GM12878 (cell line): ENCODE measurements at regions of chr10 and their contacts with region 1.

Region 1: GRCh38 chr10:80187465-80188409 is 17.6 kb downstream of the ANXA11 start:
- DNase-seq: peak; percentile 56
- ATAC-seq: peak; percentile 94
- H3K4me3 ChIP-seq: peak overlapping the region; percentile 28; the same call in 1 of the 2 replicates
- H3K27ac ChIP-seq: peak overlapping the region; percentile 69
- H3K4me1 ChIP-seq: peaks cover 22% of the 10 kb centered on the region
- H3K27me3 ChIP-seq: no peaks in the 10 kb centered on the region
- CTCF ChIP-seq: no peak
- EP300 ChIP-seq: peak; percentile 51 to 80; a peak in 1 of 4 replicates
- POLR2A ChIP-seq: peak; percentile 39; the same call in 1 of the 2 replicates
- RAD21 ChIP-seq: no peak

Region 2: GRCh38 chr10:80046629-80047441 is 140.9 kb before region 1 on chr10:
- CTCF ChIA-PET with region 1: no interaction called
- POLR2A ChIA-PET with region 1: no interaction called
- RAD21 ChIA-PET with region 1: no interaction called
- SMC1A ChIA-PET with region 1: no interaction called
- in situ Hi-C with region 1: no loop called
- intact Hi-C with region 1: no loop called
- DNase-seq: no peak
- ATAC-seq: peak; percentile 97
- H3K4me3 ChIP-seq: no peak overlapping the region
- H3K27ac ChIP-seq: no peak overlapping the region
- H3K4me1 ChIP-seq: no peaks in the 10 kb centered on the region
- H3K27me3 ChIP-seq: no peaks in the 10 kb centered on the region; a peak in 1 of 4 replicates
- CTCF ChIP-seq: peak; percentile 83 to 94 (median 93)
- EP300 ChIP-seq: no peak
- POLR2A ChIP-seq: no peak
- RAD21 ChIP-seq: peak; percentile 69

Region 3: GRCh38 chr10:80205478-80206276 is 17.9 kb after region 1 on chr10 and contains the start of gene ANXA11:
- CTCF ChIA-PET with region 1: interaction called, 23 read pairs
- POLR2A ChIA-PET with region 1: interaction called, 18 read pairs
- RAD21 ChIA-PET with region 1: interaction called, 59 read pairs
- SMC1A ChIA-PET with region 1: interaction called, 29 read pairs
- in situ Hi-C with region 1: no loop called
- intact Hi-C with region 1: loop called (anchors 1 kb)
- DNase-seq: peak; percentile 27
- ATAC-seq: peak; percentile 84
- H3K4me3 ChIP-seq: peak within 1 kb of the TSS; percentile 68
- H3K27ac ChIP-seq: peak within 1 kb of the TSS; percentile 95
- H3K4me1 ChIP-seq: peaks cover 12% of the 10 kb centered on the region
- H3K27me3 ChIP-seq: no peaks in the 10 kb centered on the region
- CTCF ChIP-seq: no peak
- EP300 ChIP-seq: 0 out of 4 replicates have a peak, but pooled peaks of 1 of the 2 experiments have one; percentile 36
- POLR2A ChIP-seq: peak; percentile 94
- RAD21 ChIP-seq: no peak
- polyA plus RNA-seq, gene ANXA11: 25.0 to 67.7 TPM